Activated CD4-positive, alpha-beta memory T cell treated with anti-CD3 and anti-CD28 coated beads for 36 hours (primary cell): ENCODE measurements at regions of chr17 and their contacts with region 1.

Region 1: GRCh38 chr17:74042744-74043486 is 160.6 kb upstream of the RPL38 start:
- DNase-seq: peak; percentile 81
- H3K4me3 Mint-ChIP-seq: no peak overlapping the region
- H3K27ac Mint-ChIP-seq: no peak overlapping the region
- H3K4me1 Mint-ChIP-seq: peaks cover 5% of the 10 kb centered on the region
- H3K27me3 Mint-ChIP-seq: no peaks in the 10 kb centered on the region

Region 2: DNA sequence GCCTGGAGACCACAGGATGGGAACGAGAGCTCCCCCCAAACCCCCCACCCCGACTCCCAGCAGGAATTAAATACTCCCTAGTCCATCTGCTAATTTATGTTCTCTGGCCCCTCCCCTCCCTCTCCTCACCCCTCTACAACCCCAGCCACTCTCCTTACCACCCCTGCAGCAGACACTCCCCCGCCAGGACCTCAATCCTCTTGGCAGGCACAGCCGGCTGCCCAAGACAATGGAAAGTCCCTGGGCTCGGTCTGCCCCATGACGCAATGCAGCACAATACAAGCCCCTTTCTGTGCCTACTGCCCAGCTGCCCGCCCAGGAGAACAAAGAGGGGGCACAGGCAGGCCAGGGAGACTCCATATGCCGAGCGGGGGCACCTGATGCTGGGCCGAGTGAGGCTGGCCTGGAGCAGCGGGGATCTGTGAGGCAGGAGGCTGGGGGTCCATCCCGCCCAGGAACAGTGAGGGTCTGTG is 700.8 kb before region 1 on chr17:
- CTCF ChIA-PET with region 1: no interaction called
- POLR2A ChIA-PET with region 1: no interaction called
- intact Hi-C with region 1: no loop called
- DNase-seq: no peak
- H3K4me3 Mint-ChIP-seq: no peak overlapping the region
- H3K27ac Mint-ChIP-seq: no peak overlapping the region
- H3K4me1 Mint-ChIP-seq: peaks cover 6% of the 10 kb centered on the region
- H3K27me3 Mint-ChIP-seq: peaks cover 2% of the 10 kb centered on the region

Region 3: DNA sequence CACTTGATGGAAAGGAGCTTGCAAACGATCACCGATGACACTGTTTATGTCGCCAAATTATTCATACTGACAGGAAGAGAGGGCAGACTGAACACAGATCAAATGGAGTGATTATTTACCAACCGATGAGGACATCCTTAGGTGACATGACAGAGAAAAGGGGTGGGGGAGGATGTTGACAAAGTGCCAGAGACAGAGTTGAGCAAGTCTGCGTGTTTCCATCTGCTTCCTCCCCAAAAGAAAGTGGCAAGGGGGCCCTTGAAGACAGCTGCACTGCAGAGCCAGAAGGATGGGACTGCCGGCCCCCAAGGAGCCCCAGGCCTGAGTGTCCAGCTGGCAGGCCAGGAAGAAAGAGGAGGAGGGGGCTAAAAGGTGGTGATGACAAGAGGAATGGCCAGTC is 30.4 kb before region 1 on chr17:
- CTCF ChIA-PET with region 1: no interaction called
- POLR2A ChIA-PET with region 1: no interaction called
- intact Hi-C with region 1: loop called (anchors 2 kb)
- DNase-seq: peak; percentile 68
- H3K4me3 Mint-ChIP-seq: no peak overlapping the region
- H3K27ac Mint-ChIP-seq: peak overlapping the region; percentile 3
- H3K4me1 Mint-ChIP-seq: peaks cover 23% of the 10 kb centered on the region
- H3K27me3 Mint-ChIP-seq: peaks cover 6% of the 10 kb centered on the region

Region 4: DNA sequence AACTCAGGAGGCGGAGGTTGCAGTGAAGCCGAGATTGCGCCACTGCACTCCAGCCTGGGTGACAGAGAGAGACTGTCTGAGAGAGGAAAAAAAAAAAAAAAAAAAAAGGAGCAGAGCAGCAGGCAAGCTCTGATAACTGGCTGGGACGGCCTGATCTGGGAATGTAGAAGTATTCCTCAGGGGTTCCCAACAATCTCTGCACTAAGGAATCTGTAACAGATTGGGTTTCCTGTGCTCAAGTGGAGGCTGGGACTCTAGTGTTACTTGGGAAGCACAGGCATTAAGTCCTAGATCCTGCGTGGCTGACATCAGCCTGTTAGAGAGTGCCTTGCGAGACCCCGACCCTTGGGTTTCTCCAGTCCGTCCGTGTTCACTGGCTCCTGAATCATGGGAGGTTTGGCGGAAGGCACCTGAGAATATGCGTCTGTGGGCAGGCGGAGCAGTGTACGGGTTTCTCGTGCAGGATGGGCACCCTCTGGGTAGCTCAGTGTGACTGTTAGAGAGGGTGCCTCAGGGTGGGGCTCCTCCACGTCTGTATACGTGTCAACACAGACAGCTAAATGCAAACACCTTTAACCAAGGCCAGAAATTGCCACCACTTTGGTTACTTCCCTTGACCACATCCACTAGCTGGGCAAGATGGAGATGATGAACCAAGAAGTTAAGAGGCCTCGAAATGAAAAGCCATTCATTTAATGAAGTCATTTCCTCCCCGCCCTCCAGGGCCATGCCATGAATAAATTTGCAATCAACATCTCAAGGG is 14.4 kb before region 1 on chr17:
- CTCF ChIA-PET with region 1: no interaction called
- POLR2A ChIA-PET with region 1: no interaction called
- intact Hi-C with region 1: no loop called
- DNase-seq: no peak
- H3K4me3 Mint-ChIP-seq: no peak overlapping the region
- H3K27ac Mint-ChIP-seq: no peak overlapping the region
- H3K4me1 Mint-ChIP-seq: no peaks in the 10 kb centered on the region
- H3K27me3 Mint-ChIP-seq: peaks cover 6% of the 10 kb centered on the region